Gastrocnemius medialis (tissue), 4 donors: ENCODE measurements at regions of chr13 and their contacts with region 1.

Region 1: DNA sequence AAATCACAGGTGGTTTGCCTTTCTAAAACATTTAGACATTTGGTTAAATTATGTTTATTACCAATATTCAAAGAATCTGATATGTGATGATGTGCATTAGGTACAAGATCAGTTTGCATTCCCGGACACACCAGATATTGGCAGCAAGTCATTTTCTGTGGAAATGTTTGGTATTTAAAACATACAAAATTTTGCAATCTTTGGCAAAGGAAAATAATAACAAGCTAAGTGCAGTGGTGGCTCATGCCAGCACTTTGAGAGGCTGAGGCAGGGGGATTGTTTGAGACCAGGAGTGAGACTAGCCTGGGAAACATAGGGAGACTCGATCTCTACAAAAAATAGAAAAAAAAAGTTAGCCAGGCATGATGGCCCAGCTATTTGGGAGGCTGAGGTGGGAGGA is 29.1 kb upstream of the TSC22D1 start:
- DNase-seq: no peak
- ATAC-seq: peak in 1 of 2 donors; percentile 20
- H3K4me3 ChIP-seq: no peak overlapping the region
- H3K27ac ChIP-seq: no peak overlapping the region
- H3K4me1 ChIP-seq: peaks cover 5 to 6% of the 10 kb centered on the region in 2 donors
- H3K27me3 ChIP-seq: no peaks in the 10 kb centered on the region
- CTCF ChIP-seq: no peak
- POLR2A ChIP-seq: no peak

Region 2: GRCh38 chr13:44667943-44668342 is 62.7 kb after region 1 on chr13:
- in situ Hi-C with region 1: loop called in 1 of 4 experiments (anchors 10 kb)
- intact Hi-C with region 1: no loop called
- DNase-seq: no peak
- ATAC-seq: no peak
- H3K4me3 ChIP-seq: peak overlapping the region in 2 of 4 donors; percentile 11 to 46
- H3K27ac ChIP-seq: no peak overlapping the region
- H3K4me1 ChIP-seq: peaks cover 8 to 13% of the 10 kb centered on the region in 2 donors
- H3K27me3 ChIP-seq: no peaks in the 10 kb centered on the region
- CTCF ChIP-seq: no peak
- POLR2A ChIP-seq: no peak